B cell (primary cell): ENCODE measurements at regions of chr12 and their contacts with region 1.

Region 1: DNA sequence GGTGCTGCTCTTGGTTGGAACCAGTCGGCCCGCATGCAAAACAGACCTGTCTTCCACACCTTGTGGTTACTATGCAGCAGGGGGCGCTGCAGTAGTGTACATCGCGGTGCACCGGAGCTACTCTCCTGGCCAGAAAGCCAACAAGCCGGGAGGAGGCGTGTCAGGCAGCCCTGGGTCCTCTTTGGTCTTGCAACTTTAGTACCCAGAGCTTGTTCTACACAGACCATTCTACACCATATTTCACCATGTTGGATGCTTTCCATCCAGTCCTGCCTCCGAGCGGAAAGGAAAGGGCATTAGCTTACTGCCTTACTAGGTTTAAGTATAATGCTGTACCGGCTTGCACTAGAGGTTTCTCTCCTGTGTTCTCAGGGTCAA is 927 bp upstream of the TMTC2 start:
- DNase-seq: peak; percentile 89
- ATAC-seq: peak; percentile 59
- H3K4me3 ChIP-seq: peak overlapping the region; percentile 71 to 98 (median 86)
- H3K4me3 Mint-ChIP-seq: peak overlapping the region; percentile 93
- H3K27ac ChIP-seq: peak overlapping the region; percentile 83 to 92
- H3K27ac Mint-ChIP-seq: peak overlapping the region; percentile 92
- H3K4me1 ChIP-seq: peaks cover 8 to 16% of the 10 kb centered on the region in 2 donors
- H3K4me1 Mint-ChIP-seq: peaks cover 17% of the 10 kb centered on the region
- H3K27me3 ChIP-seq: no peaks in the 10 kb centered on the region
- H3K27me3 Mint-ChIP-seq: peaks cover 19% of the 10 kb centered on the region
- CTCF ChIP-seq: peak; percentile 79

Region 2: GRCh38 chr12:82660541-82661325 is 25.0 kb before region 1 on chr12:
- CTCF ChIA-PET with region 1: no interaction called
- POLR2A ChIA-PET with region 1: no interaction called
- intact Hi-C with region 1: no loop called
- DNase-seq: no peak
- ATAC-seq: no peak
- H3K4me3 ChIP-seq: no peak overlapping the region
- H3K4me3 Mint-ChIP-seq: no peak overlapping the region
- H3K27ac ChIP-seq: no peak overlapping the region
- H3K27ac Mint-ChIP-seq: no peak overlapping the region
- H3K4me1 ChIP-seq: no peaks in the 10 kb centered on the region
- H3K4me1 Mint-ChIP-seq: no peaks in the 10 kb centered on the region
- H3K27me3 ChIP-seq: no peaks in the 10 kb centered on the region
- H3K27me3 Mint-ChIP-seq: peaks cover 3% of the 10 kb centered on the region
- CTCF ChIP-seq: no peak

Region 3: DNA sequence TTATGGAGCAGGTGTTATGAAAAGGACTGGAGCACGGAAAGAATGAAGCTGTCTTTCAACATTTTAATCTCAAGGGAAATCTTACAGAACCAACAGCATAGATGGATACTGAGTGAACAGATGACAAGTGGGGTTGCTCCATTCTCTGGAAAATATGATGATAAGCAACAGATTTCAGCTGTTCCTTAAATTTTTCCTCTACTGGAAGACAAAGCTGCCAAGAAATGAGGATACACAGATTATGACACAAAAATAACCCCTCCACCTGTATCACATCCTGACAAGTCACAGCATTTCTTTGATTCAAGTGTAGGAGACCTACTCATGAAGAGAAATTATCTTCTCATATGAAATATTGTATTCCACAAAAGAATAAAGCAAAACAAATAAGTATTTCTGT is 12.1 kb before region 1 on chr12:
- CTCF ChIA-PET with region 1: interaction called, 12 read pairs
- POLR2A ChIA-PET with region 1: no interaction called
- intact Hi-C with region 1: no loop called
- DNase-seq: no peak
- ATAC-seq: no peak
- H3K4me3 ChIP-seq: no peak overlapping the region
- H3K4me3 Mint-ChIP-seq: no peak overlapping the region
- H3K27ac ChIP-seq: no peak overlapping the region
- H3K27ac Mint-ChIP-seq: no peak overlapping the region
- H3K4me1 ChIP-seq: no peaks in the 10 kb centered on the region
- H3K4me1 Mint-ChIP-seq: no peaks in the 10 kb centered on the region
- H3K27me3 ChIP-seq: no peaks in the 10 kb centered on the region
- H3K27me3 Mint-ChIP-seq: peaks cover 12% of the 10 kb centered on the region
- CTCF ChIP-seq: no peak

Region 4: GRCh38 chr12:82793751-82794281 is 108.0 kb after region 1 on chr12:
- CTCF ChIA-PET with region 1: no interaction called
- POLR2A ChIA-PET with region 1: no interaction called
- intact Hi-C with region 1: no loop called
- DNase-seq: no peak
- ATAC-seq: no peak
- H3K4me3 ChIP-seq: no peak overlapping the region
- H3K4me3 Mint-ChIP-seq: no peak overlapping the region
- H3K27ac ChIP-seq: no peak overlapping the region
- H3K27ac Mint-ChIP-seq: no peak overlapping the region
- H3K4me1 ChIP-seq: no peaks in the 10 kb centered on the region
- H3K4me1 Mint-ChIP-seq: no peaks in the 10 kb centered on the region
- H3K27me3 ChIP-seq: no peaks in the 10 kb centered on the region
- H3K27me3 Mint-ChIP-seq: no peaks in the 10 kb centered on the region
- CTCF ChIP-seq: no peak

Region 5: DNA sequence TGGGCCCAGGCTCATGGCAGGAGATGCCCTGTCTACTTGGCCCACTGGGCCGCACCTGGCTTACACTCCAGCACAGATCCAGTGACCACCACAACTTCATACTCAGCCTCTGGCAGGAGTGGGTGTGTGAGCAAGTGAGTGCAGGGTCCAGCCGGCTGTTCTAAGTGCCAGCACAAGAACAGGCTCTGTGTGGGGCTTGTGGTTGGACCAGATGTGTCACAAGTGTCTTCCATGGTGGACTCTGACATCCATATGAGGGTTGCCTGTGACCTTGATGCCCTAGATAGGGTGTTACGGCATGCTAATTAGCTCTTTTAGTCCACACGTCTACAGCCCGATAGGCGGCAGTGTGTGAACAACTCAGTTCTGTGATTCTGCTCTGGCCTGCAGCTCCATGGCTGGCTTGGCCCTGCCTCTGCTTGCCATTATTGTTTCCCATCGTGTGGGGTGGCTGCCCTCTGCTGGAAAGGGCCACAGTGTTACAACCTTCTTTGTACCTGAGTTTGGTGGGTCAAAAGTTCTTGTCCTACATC is 1137.7 kb after region 1 on chr12:
- CTCF ChIA-PET with region 1: interaction called, 6 read pairs
- POLR2A ChIA-PET with region 1: no interaction called
- intact Hi-C with region 1: loop called (anchors 5 kb)
- DNase-seq: peak; percentile 9
- ATAC-seq: no peak
- H3K4me3 ChIP-seq: no peak overlapping the region
- H3K4me3 Mint-ChIP-seq: no peak overlapping the region
- H3K27ac ChIP-seq: no peak overlapping the region
- H3K27ac Mint-ChIP-seq: no peak overlapping the region
- H3K4me1 ChIP-seq: no peaks in the 10 kb centered on the region
- H3K4me1 Mint-ChIP-seq: no peaks in the 10 kb centered on the region
- H3K27me3 ChIP-seq: no peaks in the 10 kb centered on the region
- H3K27me3 Mint-ChIP-seq: no peaks in the 10 kb centered on the region
- CTCF ChIP-seq: no peak

Region 6: DNA sequence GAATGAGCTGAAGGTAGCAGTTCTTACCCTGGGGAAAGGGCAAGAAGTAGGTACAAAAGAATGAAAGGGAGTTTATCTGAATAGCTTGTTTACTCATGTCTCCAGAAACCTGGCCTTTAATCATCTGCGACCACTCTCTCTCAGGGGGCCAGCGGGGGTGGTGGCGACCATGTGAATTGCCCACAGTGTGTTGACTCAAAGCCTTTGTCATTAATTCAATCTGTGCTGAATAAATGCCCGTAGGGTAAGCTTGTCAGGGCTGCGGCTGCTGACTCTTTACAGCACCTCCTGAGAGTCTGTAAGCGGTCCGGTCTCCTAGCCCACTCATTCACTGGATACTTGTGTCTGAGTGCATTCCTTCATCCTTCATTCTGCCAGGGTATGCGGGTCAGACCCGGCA is 1352.5 kb after region 1 on chr12:
- CTCF ChIA-PET with region 1: no interaction called
- POLR2A ChIA-PET with region 1: no interaction called
- intact Hi-C with region 1: loop called (anchors 5 kb)
- DNase-seq: no peak
- ATAC-seq: no peak
- H3K4me3 ChIP-seq: no peak overlapping the region
- H3K4me3 Mint-ChIP-seq: no peak overlapping the region
- H3K27ac ChIP-seq: no peak overlapping the region
- H3K27ac Mint-ChIP-seq: no peak overlapping the region
- H3K4me1 ChIP-seq: no peaks in the 10 kb centered on the region
- H3K4me1 Mint-ChIP-seq: no peaks in the 10 kb centered on the region
- H3K27me3 ChIP-seq: no peaks in the 10 kb centered on the region
- H3K27me3 Mint-ChIP-seq: no peaks in the 10 kb centered on the region
- CTCF ChIP-seq: no peak

Region 7: DNA sequence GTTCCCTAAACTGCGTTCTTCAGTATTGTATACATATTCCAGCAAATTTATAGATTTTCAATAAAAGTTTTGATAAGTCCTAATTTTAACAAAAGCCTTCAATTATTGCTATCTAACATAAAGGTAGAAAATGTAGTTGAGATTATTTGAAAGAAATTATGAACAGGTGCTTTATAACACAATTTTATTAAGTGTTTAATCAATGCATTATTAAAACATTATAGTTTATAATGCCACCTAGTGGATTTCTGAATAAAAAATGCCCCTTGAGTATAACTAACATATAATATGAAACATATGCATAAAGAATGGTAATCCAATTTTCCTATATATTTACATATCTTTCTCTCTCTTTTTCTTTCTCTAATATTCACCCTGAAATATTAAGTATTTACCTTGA is 1711.5 kb after region 1 on chr12:
- CTCF ChIA-PET with region 1: interaction called, 3 read pairs
- POLR2A ChIA-PET with region 1: no interaction called
- intact Hi-C with region 1: loop called (anchors 5 kb)
- DNase-seq: no peak
- ATAC-seq: no peak
- H3K4me3 ChIP-seq: no peak overlapping the region
- H3K4me3 Mint-ChIP-seq: no peak overlapping the region
- H3K27ac ChIP-seq: no peak overlapping the region
- H3K27ac Mint-ChIP-seq: no peak overlapping the region
- H3K4me1 ChIP-seq: no peaks in the 10 kb centered on the region
- H3K4me1 Mint-ChIP-seq: no peaks in the 10 kb centered on the region
- H3K27me3 ChIP-seq: no peaks in the 10 kb centered on the region
- H3K27me3 Mint-ChIP-seq: no peaks in the 10 kb centered on the region
- CTCF ChIP-seq: no peak

Region 8: DNA sequence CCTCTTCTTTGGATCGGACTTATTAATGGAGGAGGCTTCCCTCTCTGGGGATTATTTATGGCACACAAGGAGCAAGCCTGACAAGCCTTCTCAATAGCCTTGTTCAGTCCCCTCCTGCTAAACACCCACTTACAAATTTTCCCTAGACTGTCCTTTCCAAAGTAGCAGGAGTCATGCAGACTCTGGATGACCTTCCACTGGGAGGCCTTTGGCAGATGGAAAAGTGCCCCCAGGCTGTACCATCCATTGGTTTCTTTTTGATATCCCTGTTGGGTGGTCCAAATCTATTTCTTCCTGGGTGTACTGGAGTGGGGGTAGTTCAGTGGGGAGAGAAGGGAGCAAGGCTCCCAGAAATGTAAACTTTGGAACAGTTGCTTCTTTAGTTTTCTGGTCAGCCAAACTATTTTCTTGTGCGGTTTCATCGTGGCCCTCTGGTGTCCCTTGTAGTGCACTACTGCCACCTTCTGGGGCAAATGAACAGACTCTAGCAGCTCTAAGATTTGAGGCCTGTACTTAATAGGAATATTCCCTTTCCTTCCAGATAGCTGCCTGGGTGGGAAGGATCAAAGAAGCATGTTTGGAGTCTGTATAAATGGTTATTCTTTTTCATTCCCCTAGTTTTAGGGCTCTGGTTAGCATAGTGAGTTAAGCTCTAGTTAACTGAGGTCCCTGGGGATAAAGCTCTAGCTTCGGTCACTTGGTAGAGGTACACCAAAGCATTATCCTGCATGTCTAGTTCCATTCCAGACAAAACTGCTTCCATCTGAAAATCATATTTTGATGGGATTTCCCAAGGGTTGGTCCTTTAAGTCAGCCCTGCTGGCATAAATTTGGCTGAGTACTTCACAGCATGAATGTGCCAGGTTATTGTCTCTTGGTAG is 1817.4 kb after region 1 on chr12:
- CTCF ChIA-PET with region 1: interaction called, 10 read pairs
- POLR2A ChIA-PET with region 1: no interaction called
- intact Hi-C with region 1: loop called (anchors 5 kb)
- DNase-seq: peak; percentile 7
- ATAC-seq: no peak
- H3K4me3 ChIP-seq: no peak overlapping the region
- H3K4me3 Mint-ChIP-seq: no peak overlapping the region
- H3K27ac ChIP-seq: no peak overlapping the region
- H3K27ac Mint-ChIP-seq: no peak overlapping the region
- H3K4me1 ChIP-seq: no peaks in the 10 kb centered on the region
- H3K4me1 Mint-ChIP-seq: no peaks in the 10 kb centered on the region
- H3K27me3 ChIP-seq: no peaks in the 10 kb centered on the region
- H3K27me3 Mint-ChIP-seq: no peaks in the 10 kb centered on the region
- CTCF ChIP-seq: peak; percentile 14